HAP-1 (cell line): ENCODE measurements at regions of chr3 and their contacts with region 1.

Region 1: GRCh38 chr3:146326670-146327543 is 76.0 kb upstream of the PLSCR4 start:
- DNase-seq: peak; percentile 40 to 48
- H3K4me3 ChIP-seq: no peak overlapping the region
- H3K4me1 ChIP-seq: no peaks in the 10 kb centered on the region
- H3K27me3 ChIP-seq: no peaks in the 10 kb centered on the region

Region 2: GRCh38 chr3:146065573-146066006 is 261.3 kb before region 1 on chr3:
- in situ Hi-C with region 1: loop called (anchors 10 kb)
- DNase-seq: peak; percentile 29 to 52
- H3K4me3 ChIP-seq: no peak overlapping the region
- H3K4me1 ChIP-seq: no peaks in the 10 kb centered on the region; the same call in 1 of the 2 replicates
- H3K27me3 ChIP-seq: no peaks in the 10 kb centered on the region